ENCODE measurements at regions of chr1 and their contacts with region 1.

Region 1: GRCh38 chr1:29050166-29050565 is 73.5 kb downstream of the TMEM200B start:
- DNase-seq: no peak
- ATAC-seq: no peak
- H3K4me3 ChIP-seq: no peak overlapping the region
- H3K4me3 Mint-ChIP-seq: no peak overlapping the region
- H3K27ac ChIP-seq: no peak overlapping the region
- H3K27ac Mint-ChIP-seq: no peak overlapping the region
- H3K4me1 ChIP-seq: no peaks in the 10 kb centered on the region
- H3K4me1 Mint-ChIP-seq: peaks cover 0 to 3% (median 0%) of the 10 kb centered on the region in 7 donors
- H3K27me3 ChIP-seq: no peaks in the 10 kb centered on the region
- H3K27me3 Mint-ChIP-seq: no peaks in the 10 kb centered on the region

Region 2: GRCh38 chr1:29033829-29034466 is 16.2 kb before region 1 on chr1:
- CTCF ChIA-PET with region 1: interaction called, 12 read pairs
- POLR2A ChIA-PET with region 1: interaction called, 5 read pairs
- intact Hi-C with region 1: no loop called
- DNase-seq: peak in 7 of 9 donors; percentile 9 to 44 (median 30)
- ATAC-seq: peak; percentile 75
- H3K4me3 ChIP-seq: no peak overlapping the region
- H3K4me3 Mint-ChIP-seq: no peak overlapping the region
- H3K27ac ChIP-seq: no peak overlapping the region
- H3K27ac Mint-ChIP-seq: peak overlapping the region in 3 of 9 donors; percentile 18 to 64 (median 48)
- H3K4me1 ChIP-seq: no peaks in the 10 kb centered on the region
- H3K4me1 Mint-ChIP-seq: peaks cover 0 to 3% (median 0%) of the 10 kb centered on the region in 7 donors
- H3K27me3 ChIP-seq: no peaks in the 10 kb centered on the region
- H3K27me3 Mint-ChIP-seq: no peaks in the 10 kb centered on the region

Measured in naive thymus-derived CD4-positive, alpha-beta T cell (primary cell).